ENCODE measurements at regions of chr16 and their contacts with region 1.

Region 1: DNA sequence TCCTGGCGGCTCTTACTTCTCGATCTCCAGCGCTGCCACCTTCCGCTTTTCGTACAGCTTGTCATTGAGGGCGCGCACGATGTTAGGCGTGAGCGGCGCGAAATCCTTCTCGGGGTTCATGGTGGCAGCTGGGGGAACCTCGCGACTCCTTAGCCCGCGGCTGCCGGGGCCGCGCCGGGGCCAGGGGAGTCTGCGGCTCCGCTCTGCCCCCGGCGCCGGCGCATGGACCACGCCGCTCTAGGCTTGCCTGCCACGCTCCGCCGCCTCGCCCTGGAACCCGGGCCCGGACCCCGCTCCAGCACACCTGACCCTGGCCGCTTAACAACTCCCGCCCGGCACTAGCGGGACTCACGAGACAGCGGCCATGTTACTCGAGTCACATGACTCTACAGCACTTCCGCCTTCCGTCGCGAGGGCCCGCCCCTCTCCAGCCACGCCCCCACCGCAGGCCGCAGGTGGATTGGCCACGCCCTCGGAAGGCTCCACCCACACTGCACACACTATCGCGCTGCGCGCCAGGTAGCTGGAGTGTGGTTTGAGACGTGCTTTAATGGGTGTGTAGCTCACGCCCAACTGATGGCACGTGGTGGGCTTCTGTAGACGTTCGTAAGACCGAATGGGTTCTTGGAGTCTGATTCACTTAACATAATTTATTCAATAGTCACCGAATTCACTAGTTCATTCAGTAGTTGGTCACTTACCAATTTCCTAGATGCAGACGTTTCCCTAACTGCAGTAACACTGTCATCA is at the start of gene VAC14:
- DNase-seq: peak; percentile 98
- ATAC-seq: peak; percentile 95
- H3K4me3 Mint-ChIP-seq: peak within 1 kb of the TSS; percentile 90
- H3K27ac Mint-ChIP-seq: peak within 1 kb of the TSS; percentile 83
- H3K4me1 Mint-ChIP-seq: peaks cover 31% of the 10 kb centered on the region
- H3K27me3 Mint-ChIP-seq: no peaks in the 10 kb centered on the region
- total RNA-seq, gene VAC14: 24.8 to 26.2 TPM

Region 2: DNA sequence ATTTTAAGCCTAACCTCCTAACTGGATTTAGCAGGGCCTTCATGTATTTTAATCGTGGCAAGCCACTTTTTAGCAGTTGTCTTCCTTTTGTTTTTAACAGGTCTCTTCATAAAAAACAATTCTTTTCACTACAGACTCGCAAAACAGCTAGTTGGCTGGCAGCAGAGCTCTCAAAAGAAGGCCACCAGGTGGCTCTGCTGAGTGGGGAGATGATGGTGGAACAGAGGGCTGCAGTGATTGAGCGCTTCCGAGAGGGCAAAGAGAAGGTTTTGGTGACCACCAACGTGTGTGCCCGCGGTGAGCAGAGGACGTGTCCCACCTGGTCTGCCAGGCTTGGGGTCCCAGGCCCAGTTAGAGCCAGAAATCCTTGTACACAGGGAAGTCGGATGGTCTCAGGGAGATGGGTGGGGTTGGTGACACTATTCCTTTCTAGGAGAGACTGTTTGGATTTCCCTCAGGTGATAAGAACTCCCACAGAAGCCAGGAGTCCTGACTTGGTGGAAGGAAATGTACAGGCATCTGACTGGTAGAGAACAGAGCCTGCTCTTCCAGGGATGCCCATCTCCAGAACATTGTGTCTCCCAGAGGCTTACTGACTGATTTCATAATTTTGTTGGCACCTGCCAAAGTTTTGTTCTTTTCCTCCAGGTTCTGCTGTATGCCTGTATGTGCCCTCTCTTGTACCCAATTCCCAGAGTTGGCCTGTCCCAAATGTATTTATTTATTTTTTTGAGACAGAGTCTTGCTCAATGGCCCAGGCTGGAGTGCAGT is 469.2 kb before region 1 on chr16:
- CTCF ChIA-PET with region 1: no interaction called
- POLR2A ChIA-PET with region 1: no interaction called
- intact Hi-C with region 1: no loop called
- DNase-seq: peak; percentile 34
- ATAC-seq: no peak
- H3K4me3 Mint-ChIP-seq: no peak overlapping the region
- H3K27ac Mint-ChIP-seq: no peak overlapping the region
- H3K4me1 Mint-ChIP-seq: no peaks in the 10 kb centered on the region
- H3K27me3 Mint-ChIP-seq: no peaks in the 10 kb centered on the region

Region 3: DNA sequence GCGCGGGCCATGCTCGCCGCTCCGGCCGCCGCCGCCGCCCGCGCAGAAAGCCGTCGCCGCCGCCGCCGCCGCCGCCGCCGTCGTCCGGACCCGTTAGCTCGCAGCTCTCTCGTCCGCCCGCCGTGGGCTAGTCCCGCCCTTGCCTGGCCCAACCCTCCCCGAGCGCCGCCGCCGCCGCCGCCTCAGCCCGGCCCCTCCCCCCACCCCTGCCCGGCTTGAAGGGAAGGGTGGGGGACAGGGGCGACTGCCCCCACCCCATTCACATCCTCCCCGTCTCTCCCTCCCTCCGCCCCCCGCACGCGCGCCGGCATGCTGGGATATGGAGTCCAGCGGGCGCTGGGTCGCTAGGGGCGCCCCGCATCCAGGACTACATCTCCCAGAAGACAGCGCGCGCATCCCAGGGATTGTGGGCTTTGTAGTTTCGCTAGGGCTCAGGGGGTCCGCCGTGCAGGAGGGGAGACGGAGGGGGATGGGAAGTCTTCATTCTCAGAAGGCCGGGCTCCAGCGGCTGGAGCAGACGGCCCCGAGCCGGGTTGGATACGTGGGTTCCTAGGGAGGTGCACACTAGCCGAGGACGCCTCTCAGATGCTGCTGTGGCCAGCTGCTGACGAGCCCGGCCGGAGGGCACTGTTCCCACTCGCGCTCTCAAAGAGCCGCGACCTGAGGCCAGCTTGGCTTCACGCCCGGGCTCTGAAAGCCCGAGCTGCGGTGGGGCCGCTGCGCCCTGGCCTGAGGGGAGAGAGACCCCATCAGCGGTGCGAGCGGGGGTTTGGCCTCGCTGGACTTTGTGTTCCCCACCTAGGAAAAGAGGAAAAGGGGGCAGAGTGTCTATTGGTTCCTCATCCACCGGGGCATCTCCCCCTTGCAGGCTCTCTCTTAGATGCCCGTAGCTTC is 361.7 kb before region 1 on chr16 and contains the start of gene ST3GAL2:
- CTCF ChIA-PET with region 1: no interaction called
- POLR2A ChIA-PET with region 1: no interaction called
- intact Hi-C with region 1: loop called in 1 of 2 experiments (anchors 10 kb)
- DNase-seq: peak; percentile 97
- ATAC-seq: peak; percentile 97
- H3K4me3 Mint-ChIP-seq: peak within 1 kb of the TSS; percentile 96
- H3K27ac Mint-ChIP-seq: peak within 1 kb of the TSS; percentile 89
- H3K4me1 Mint-ChIP-seq: peaks cover 33% of the 10 kb centered on the region
- H3K27me3 Mint-ChIP-seq: no peaks in the 10 kb centered on the region
- total RNA-seq, gene ST3GAL2: 14.8 to 16.6 TPM

Region 4: GRCh38 chr16:70737377-70738082 is 63.4 kb before region 1 on chr16:
- CTCF ChIA-PET with region 1: no interaction called
- POLR2A ChIA-PET with region 1: interaction called, 8 read pairs
- intact Hi-C with region 1: loop called in 1 of 2 experiments (anchors 1 kb)
- DNase-seq: peak; percentile 91
- ATAC-seq: peak; percentile 88
- H3K4me3 Mint-ChIP-seq: peak overlapping the region; percentile 55
- H3K27ac Mint-ChIP-seq: peak overlapping the region; percentile 97
- H3K4me1 Mint-ChIP-seq: peaks cover 60% of the 10 kb centered on the region
- H3K27me3 Mint-ChIP-seq: no peaks in the 10 kb centered on the region

Region 5: DNA sequence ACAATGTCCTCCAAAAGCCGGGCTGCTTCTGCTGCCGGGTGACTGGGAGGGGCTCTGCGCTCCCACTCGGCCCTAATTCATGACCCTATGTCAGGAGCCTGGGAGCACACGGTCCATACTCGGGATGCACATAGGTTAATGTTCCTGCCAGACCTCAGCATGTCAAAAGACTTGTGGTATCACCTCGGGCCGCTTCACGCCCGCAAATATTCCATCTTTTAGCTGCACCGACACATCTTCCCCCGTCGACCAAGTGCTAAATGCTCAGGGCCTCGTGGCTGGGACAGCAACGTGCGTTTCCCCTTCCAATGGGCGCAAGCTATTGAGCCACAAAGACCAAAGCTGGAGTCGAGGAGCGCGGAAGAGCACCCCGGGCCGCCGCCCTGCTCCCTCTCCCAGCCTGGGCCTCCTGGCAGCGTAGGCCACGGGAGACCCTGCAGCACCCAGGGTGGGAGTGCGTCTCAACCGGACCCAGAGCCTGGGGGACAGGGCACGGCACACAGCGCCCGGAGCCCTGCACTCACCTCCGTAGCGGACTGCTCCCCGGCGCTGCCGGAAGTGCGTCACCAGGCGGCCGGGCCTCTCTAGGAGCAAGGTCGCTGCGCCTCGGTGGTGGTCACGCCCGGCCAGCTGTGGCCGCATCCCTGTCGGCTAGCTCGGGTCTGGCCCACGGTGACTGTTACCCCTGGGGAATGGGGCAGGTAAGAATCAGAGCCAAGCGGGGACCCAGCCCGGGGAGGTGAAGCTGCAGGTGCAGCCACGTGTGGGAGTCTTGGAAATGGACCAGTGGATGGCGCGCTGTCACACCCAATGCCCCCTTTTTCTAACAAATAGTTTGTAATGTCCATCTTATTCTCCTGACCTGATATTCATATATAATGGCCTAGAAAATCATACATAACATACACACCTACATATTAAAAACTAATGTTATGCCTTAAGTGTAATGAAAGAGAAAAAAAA is 661.0 kb after region 1 on chr16 and contains the start of gene ZNF23:
- CTCF ChIA-PET with region 1: no interaction called
- POLR2A ChIA-PET with region 1: no interaction called
- intact Hi-C with region 1: loop called in 1 of 2 experiments (anchors 5 kb)
- DNase-seq: peak; percentile 88
- ATAC-seq: peak; percentile 96
- H3K4me3 Mint-ChIP-seq: peak within 1 kb of the TSS; percentile 76
- H3K27ac Mint-ChIP-seq: peak within 1 kb of the TSS; percentile 96
- H3K4me1 Mint-ChIP-seq: peaks cover 19% of the 10 kb centered on the region
- H3K27me3 Mint-ChIP-seq: no peaks in the 10 kb centered on the region
- total RNA-seq, gene ZNF23: 9.6 to 10.9 TPM

Region 6: DNA sequence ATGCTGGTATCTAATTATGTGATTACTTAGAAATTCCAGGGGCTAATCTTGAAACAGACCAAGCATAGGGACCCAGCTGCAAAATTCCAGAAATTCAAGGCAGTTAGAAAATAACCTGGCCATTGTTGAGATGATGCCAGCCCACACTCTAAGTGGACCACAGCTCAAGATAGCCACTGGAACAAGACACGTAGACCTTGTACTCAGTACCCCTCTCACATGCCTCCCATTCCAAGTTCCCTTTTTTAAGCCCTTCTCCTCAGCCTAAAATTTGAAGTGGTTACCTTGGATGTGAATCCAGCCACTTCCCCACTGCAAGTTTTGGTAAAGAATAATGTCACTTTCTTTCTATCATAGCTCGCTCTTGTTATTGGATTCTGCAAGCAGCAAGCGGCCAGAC is 692.3 kb after region 1 on chr16:
- CTCF ChIA-PET with region 1: no interaction called
- POLR2A ChIA-PET with region 1: no interaction called
- intact Hi-C with region 1: no loop called
- DNase-seq: no peak
- ATAC-seq: no peak
- H3K4me3 Mint-ChIP-seq: no peak overlapping the region
- H3K27ac Mint-ChIP-seq: no peak overlapping the region
- H3K4me1 Mint-ChIP-seq: no peaks in the 10 kb centered on the region
- H3K27me3 Mint-ChIP-seq: peaks cover 2% of the 10 kb centered on the region

Region 7: DNA sequence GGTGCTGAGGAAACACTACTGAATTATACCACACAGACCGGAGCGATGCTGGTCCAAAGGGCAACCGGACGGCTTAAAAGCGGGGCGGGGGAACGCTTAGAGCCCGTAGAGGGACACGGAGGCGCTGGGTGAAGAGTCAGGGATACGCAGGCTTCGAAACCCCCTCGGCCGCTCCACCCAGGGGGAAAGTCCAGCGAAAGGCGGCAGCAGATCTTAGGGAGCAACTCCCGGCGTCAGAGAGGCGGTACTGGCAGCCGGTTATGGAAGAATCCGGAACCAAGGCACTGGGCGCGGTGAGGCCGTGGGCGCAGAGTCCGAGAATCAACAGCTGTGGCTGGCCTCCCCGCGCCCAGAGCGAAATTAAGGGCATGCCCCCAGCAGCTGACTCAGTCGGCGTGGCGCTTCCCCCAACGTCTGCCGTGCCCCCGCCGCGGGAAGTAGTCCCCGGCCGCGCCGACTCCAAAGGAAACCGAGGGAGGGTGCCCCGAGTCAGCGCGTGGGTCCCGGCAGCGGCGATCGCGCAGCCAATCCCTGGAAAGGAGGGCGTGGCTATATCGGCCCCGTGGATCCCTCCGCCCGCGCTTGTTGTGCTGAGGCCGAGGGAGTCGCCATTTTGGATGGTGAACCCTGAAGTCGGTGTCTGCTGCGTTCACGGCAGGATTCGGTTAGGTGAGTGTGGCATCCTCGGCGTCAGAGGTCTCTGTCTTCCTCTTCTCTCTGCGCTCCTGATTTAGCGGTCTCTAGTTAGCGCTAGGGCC is 1094.1 kb after region 1 on chr16 and contains the start of gene IST1:
- CTCF ChIA-PET with region 1: no interaction called
- POLR2A ChIA-PET with region 1: no interaction called
- intact Hi-C with region 1: loop called in 1 of 2 experiments (anchors 2 kb)
- DNase-seq: peak; percentile 99
- ATAC-seq: peak; percentile 92
- H3K4me3 Mint-ChIP-seq: peak within 1 kb of the TSS; percentile 96
- H3K27ac Mint-ChIP-seq: peak within 1 kb of the TSS; percentile 94
- H3K4me1 Mint-ChIP-seq: peaks cover 31% of the 10 kb centered on the region
- H3K27me3 Mint-ChIP-seq: no peaks in the 10 kb centered on the region
- total RNA-seq, gene IST1: 170 to 179 TPM